Panc1 (cell line): ENCODE measurements at regions of chr4 and their contacts with region 1.

Region 1: DNA sequence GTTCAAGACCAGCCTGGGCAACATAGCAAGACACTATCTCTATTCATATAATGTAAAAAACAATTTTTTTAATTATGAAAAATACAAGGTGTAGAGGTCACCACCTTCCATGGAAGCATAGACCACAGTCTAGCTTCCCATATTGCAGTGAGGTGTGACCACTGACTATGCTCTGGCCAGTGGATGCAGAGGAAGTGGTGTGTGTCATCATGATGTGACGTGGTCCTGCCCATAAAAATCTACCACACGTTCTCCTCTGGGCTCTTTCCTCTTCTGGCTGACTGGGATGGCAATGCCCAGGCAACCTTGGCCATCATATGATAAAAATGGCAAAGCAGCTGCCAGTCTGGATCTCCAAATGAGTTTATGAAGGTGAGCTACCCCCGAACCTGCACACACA is 65.7 kb downstream of the RBM47 start:
- DNase-seq: no peak
- ATAC-seq: no peak
- H3K4me3 ChIP-seq: no peak overlapping the region
- H3K27ac ChIP-seq: no peak overlapping the region
- H3K4me1 ChIP-seq: peaks cover 4% of the 10 kb centered on the region; the same call in 1 of the 2 replicates
- H3K27me3 ChIP-seq: no peaks in the 10 kb centered on the region
- CTCF ChIP-seq: no peak

Region 2: GRCh38 chr4:41346306-41347061 is 782.5 kb after region 1 on chr4:
- CTCF ChIA-PET with region 1: interaction called, 15 read pairs
- POLR2A ChIA-PET with region 1: no interaction called
- in situ Hi-C with region 1: no loop called
- intact Hi-C with region 1: no loop called
- DNase-seq: no peak
- ATAC-seq: peak; percentile 51; the same call in 1 of the 2 replicates
- H3K4me3 ChIP-seq: no peak overlapping the region
- H3K27ac ChIP-seq: no peak overlapping the region
- H3K4me1 ChIP-seq: no peaks in the 10 kb centered on the region
- H3K27me3 ChIP-seq: no peaks in the 10 kb centered on the region
- CTCF ChIP-seq: no peak